Endothelial cell of umbilical vein (primary cell): ENCODE measurements at regions of chr4 and their contacts with region 1.

Region 1: DNA sequence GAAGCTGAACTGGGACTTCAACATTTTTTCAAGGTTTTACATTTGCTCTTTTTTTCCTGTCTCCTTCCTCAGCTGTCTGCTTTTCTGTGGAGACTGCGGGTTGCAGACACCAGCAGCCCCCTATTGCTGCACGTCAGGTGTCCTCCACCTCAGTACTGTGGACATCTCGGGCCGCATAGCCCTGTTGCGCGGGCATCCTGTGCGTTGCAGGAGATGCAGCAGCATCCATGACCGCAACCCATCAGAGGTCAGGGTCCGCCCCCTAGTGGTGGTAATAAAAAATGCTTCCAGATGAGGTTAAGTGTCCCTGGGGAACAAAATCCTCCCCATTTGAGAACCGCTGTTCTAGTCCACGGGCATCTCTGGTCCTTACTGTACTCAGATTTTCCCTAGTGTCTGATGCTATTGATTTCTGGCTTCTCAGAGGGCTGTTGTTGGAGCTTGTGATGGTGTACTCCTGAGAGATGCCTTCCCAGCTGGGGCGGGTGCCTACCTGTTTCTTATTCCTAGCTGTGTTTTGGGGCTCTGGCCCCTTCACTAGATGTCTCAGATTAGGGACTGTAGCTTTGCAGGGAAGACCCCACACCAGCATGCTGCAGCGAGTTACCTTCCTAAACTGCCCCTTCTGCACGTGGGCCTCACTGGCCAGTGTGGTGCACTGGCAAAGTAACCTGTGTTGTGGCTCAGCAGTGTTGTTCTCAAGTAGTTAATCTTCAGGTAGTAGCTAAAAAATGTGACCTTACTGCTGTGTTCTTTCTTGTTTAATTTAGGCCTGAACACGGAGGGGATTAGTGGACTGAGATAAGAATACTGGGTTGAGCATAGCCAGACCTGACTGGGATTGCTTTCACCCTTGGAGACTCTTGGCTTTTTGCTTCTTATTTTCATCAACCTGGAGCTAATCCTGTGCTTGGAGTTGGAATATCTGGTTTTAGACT is 28.2 kb downstream of the NSD2 start:
- DNase-seq: peak; percentile 74
- H3K4me3 ChIP-seq: no peak overlapping the region
- H3K27ac ChIP-seq: no peak overlapping the region
- H3K4me1 ChIP-seq: peaks cover 5% of the 10 kb centered on the region
- H3K27me3 ChIP-seq: no peaks in the 10 kb centered on the region
- CTCF ChIP-seq: peak; percentile 79 to 94
- POLR2A ChIP-seq: no peak

Region 2: DNA sequence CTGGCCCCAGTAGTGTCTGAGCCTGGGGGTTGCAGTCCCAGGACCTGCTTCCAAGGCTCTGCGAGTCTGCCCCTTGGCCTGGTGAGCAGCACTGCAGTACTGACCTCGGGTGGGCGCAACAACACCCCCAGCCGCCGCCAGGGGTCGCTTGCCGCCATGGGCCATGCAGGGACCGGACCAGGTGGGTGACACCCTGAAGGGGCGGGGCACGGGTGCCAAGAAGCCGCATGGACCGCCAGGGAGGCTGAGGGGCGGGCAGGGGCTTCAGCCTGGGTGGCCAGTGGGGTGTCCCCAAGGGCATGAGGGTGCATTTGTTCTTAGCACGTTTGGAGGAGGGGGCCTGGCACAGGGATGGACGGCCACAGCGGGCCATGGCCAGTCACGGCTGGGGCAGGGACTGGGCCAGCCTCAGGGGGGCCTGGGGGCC is 153.1 kb before region 1 on chr4:
- CTCF ChIA-PET with region 1: interaction called, 27 read pairs
- POLR2A ChIA-PET with region 1: no interaction called
- dilution Hi-C with region 1: no loop called
- intact Hi-C with region 1: loop called (anchors 1 kb)
- DNase-seq: peak; percentile 75
- H3K4me3 ChIP-seq: no peak overlapping the region
- H3K27ac ChIP-seq: no peak overlapping the region
- H3K4me1 ChIP-seq: peaks cover 4% of the 10 kb centered on the region
- H3K27me3 ChIP-seq: no peaks in the 10 kb centered on the region
- CTCF ChIP-seq: peak; percentile 93 to 96
- POLR2A ChIP-seq: no peak

Region 3: GRCh38 chr4:1842993-1843448 is 56.4 kb before region 1 on chr4:
- CTCF ChIA-PET with region 1: interaction called, 10 read pairs
- POLR2A ChIA-PET with region 1: no interaction called
- dilution Hi-C with region 1: no loop called
- intact Hi-C with region 1: loop called (anchors 2 kb)
- DNase-seq: peak; percentile 40
- H3K4me3 ChIP-seq: no peak overlapping the region
- H3K27ac ChIP-seq: no peak overlapping the region
- H3K4me1 ChIP-seq: no peaks in the 10 kb centered on the region
- H3K27me3 ChIP-seq: no peaks in the 10 kb centered on the region
- CTCF ChIP-seq: no peak
- POLR2A ChIP-seq: no peak

Region 4: GRCh38 chr4:1862055-1862926 is 37.1 kb before region 1 on chr4:
- CTCF ChIA-PET with region 1: interaction called, 25 read pairs
- POLR2A ChIA-PET with region 1: no interaction called
- dilution Hi-C with region 1: no loop called
- intact Hi-C with region 1: loop called (anchors 2 kb)
- DNase-seq: no peak
- H3K4me3 ChIP-seq: peak overlapping the region in 1 of 3 experiments; percentile 25
- H3K27ac ChIP-seq: no peak overlapping the region
- H3K4me1 ChIP-seq: peaks cover under 1% of the 10 kb centered on the region
- H3K27me3 ChIP-seq: peaks cover 0 to 1% of the 10 kb centered on the region in 2 experiments
- CTCF ChIP-seq: no peak
- POLR2A ChIP-seq: no peak

Region 5: DNA sequence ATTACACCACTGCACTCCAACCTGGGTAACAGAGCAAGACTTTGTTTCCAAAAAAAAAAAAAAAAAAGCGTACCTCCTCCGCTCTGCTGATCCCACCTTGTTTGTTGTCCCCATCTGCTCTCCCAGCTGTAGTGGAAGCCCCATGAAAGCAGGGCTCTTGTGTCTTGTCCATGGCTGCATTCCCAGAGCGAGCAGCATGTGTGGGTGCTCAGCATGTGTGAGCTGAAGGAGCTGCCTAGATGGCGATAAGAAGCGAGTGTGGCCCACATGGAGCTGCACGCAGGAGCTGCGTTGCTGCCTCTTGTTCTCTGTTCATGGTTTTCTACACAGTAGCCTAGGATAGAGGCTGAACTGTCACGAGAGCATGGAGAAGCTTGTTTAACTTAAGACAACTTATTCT is 15.8 kb before region 1 on chr4:
- CTCF ChIA-PET with region 1: interaction called, 16 read pairs
- POLR2A ChIA-PET with region 1: no interaction called
- dilution Hi-C with region 1: no loop called
- intact Hi-C with region 1: no loop called
- DNase-seq: no peak
- H3K4me3 ChIP-seq: no peak overlapping the region
- H3K27ac ChIP-seq: no peak overlapping the region
- H3K4me1 ChIP-seq: no peaks in the 10 kb centered on the region
- H3K27me3 ChIP-seq: no peaks in the 10 kb centered on the region
- CTCF ChIP-seq: no peak
- POLR2A ChIP-seq: no peak

Region 6: GRCh38 chr4:1967512-1968149 is 68.2 kb after region 1 on chr4:
- CTCF ChIA-PET with region 1: no interaction called
- POLR2A ChIA-PET with region 1: no interaction called
- dilution Hi-C with region 1: no loop called
- intact Hi-C with region 1: no loop called
- DNase-seq: peak; percentile 16
- H3K4me3 ChIP-seq: no peak overlapping the region
- H3K27ac ChIP-seq: no peak overlapping the region
- H3K4me1 ChIP-seq: no peaks in the 10 kb centered on the region
- H3K27me3 ChIP-seq: no peaks in the 10 kb centered on the region
- CTCF ChIP-seq: no peak
- POLR2A ChIP-seq: no peak